ENCODE measurements at regions of chr4 and their contacts with region 1.

Region 1: DNA sequence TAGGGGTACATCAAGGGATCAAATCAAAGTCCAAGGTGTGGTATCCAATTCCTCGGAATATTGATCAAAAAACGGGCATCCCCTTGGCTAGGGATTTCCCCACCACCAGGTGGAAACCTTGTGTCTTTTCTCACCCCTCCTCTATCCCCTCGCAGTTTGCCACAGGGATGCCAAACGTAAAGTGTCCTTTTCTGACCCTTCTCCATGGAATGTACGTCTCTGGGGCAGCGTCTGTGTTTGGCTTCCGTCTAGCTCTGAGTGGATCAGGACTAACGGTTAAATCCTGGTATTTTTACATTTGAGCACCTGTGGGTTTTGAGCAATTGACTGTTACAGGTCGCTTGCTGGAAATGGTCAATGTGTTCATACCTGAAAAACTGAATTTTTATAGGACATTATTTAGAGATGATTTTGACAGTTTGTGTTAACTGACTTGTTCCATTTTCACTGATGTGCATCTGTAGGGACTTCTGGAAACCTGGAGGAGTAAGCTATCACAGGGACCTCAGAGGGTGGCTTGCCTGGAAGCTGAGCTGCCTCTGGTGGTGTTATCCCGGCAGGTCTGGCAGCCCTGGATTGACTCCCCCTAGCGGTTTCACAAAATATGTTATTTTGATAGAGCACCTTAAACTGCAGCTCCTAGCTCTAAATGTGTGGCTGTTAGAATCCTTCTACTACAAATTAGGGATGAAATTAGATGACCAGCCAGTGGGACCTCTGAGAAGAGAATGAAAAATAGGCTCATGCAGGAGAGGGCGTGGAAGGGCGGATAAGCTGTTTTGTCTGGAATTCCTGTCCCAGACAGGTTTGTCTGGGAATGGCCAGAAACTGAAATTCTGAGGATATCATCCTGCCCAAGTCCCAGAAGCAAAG is 8.8 kb upstream of the MGST2 start:
- DNase-seq: peak; percentile 61
- H3K4me3 Mint-ChIP-seq: peak overlapping the region; percentile 53
- H3K27ac Mint-ChIP-seq: peak overlapping the region; percentile 97
- H3K4me1 Mint-ChIP-seq: peaks cover 40% of the 10 kb centered on the region
- H3K27me3 Mint-ChIP-seq: peaks cover 4% of the 10 kb centered on the region

Region 2: DNA sequence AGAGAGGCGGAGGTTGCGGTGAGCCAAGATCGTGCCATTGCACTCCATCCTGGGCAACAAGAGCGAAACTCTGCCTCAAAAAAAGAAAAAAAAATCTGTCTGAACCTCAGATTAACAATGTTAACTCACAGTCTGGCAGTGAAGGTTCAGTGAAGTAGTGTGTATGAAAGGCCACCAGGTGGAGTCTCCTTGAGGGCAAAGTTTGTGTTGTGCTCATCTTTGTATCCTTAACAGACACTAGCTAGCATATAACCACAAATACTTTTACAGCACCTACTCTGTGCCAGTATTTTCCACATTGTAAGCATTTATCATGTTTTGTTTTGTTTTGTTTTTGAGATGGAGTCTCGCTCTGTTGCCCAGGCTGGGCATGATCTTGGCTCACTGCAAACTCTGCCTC is 37.2 kb before region 1 on chr4:
- CTCF ChIA-PET with region 1: interaction called, 11 read pairs
- POLR2A ChIA-PET with region 1: interaction called, 3 read pairs
- DNase-seq: no peak
- H3K4me3 Mint-ChIP-seq: no peak overlapping the region
- H3K27ac Mint-ChIP-seq: no peak overlapping the region
- H3K4me1 Mint-ChIP-seq: no peaks in the 10 kb centered on the region
- H3K27me3 Mint-ChIP-seq: peaks cover 6% of the 10 kb centered on the region

Region 3: DNA sequence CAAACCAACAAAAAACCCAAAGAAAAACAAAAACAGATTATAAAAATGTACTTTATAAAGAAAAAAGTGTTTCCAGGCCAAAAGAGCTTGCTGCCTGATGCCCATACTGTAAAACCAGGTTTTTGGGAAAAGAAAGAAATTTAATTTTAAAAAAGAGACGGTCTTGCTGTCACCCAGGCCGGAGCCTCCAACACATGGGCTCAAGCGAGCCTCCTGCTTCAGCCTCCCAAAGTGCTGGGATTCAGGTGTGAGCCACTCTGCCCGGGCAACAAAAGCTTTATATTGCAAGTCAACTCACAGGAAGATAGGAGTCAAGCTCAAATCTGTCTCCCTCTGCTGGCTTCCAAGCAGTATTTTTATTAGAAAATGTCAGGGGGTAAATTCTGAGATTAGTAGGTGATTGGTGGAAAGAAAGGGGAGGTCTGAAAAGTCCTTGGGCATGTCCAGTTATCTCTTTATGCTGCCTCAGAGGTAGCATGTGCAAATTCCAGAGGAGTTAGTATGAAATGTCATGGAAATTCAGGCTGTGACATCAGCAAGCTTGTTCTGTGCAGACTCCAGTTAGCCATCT is 48.1 kb after region 1 on chr4:
- CTCF ChIA-PET with region 1: interaction called, 12 read pairs
- POLR2A ChIA-PET with region 1: no interaction called
- DNase-seq: no peak
- H3K4me3 Mint-ChIP-seq: no peak overlapping the region
- H3K27ac Mint-ChIP-seq: no peak overlapping the region
- H3K4me1 Mint-ChIP-seq: peaks cover 5% of the 10 kb centered on the region
- H3K27me3 Mint-ChIP-seq: no peaks in the 10 kb centered on the region

Region 4: DNA sequence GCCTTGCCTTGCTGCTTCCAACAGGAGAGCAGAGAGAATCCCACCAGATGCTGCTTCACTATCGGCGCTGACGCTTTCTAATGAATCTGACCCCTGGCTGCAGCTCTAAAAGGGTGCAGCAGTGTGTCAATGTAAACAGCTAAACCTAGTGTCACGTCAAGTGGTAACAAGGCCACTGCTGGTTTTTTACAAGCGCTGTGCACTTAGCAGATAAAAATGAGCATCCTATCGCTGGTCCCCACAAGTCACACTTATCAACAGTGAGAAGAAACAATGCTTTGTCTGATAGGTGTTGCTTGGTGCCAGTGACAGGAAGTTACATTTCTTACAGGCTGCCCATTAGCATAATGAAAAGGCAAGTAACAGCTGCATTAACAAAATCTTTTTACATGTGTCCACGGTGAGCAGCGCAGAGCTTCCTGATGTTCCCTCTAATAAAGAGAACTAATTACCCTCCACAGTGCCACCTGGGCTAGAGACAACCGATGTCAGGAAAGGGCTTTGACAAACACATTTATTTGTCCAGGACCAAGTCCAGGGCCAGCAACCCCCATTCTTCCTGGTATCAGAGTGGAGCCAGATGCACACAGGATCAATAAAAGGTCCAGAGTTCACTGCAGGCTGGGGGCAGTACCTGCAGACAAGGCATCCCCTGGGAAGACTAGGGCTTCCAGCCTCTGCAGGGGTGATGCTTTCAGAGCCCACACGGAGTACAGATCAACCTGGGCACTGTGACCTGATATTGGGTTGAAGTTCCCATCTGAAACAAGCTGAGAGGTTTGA is 184.8 kb after region 1 on chr4:
- CTCF ChIA-PET with region 1: no interaction called
- POLR2A ChIA-PET with region 1: no interaction called
- DNase-seq: no peak
- H3K4me3 Mint-ChIP-seq: no peak overlapping the region
- H3K27ac Mint-ChIP-seq: no peak overlapping the region
- H3K4me1 Mint-ChIP-seq: peaks cover 3% of the 10 kb centered on the region
- H3K27me3 Mint-ChIP-seq: peaks cover 9% of the 10 kb centered on the region

Measured in activated CD4-positive, alpha-beta memory T cell treated with anti-CD3 and anti-CD28 coated beads, Interleukin-2, amount 10 ng/mL, durations not matched to agents 7 days and 5 days (primary cell).